Left colon (tissue), 2 donors: ENCODE measurements at regions of chr5 and their contacts with region 1.

Region 1: GRCh38 chr5:172920447-172920849 is 38.8 kb upstream of the RPL26L1 start:
- DNase-seq: peak in 1 of 2 donors; percentile 51
- ATAC-seq: no peak

Region 2: GRCh38 chr5:172463031-172463430 is 457.4 kb before region 1 on chr5:
- intact Hi-C with region 1: loop called in 1 of 2 experiments (anchors 10 kb)
- DNase-seq: no peak
- ATAC-seq: no peak

Region 3: GRCh38 chr5:172688349-172689217 is 231.9 kb before region 1 on chr5:
- intact Hi-C with region 1: no loop called
- DNase-seq: peak in 1 of 2 donors; percentile 62
- ATAC-seq: peak; percentile 68